Activated naive CD8-positive, alpha-beta T cell treated with anti-CD3 and anti-CD28 coated beads, Interleukin-2, amount 10 ng/mL, durations not matched to agents 7 days and 5 days (primary cell): ENCODE measurements at regions of chr2 and their contacts with region 1.

Region 1: DNA sequence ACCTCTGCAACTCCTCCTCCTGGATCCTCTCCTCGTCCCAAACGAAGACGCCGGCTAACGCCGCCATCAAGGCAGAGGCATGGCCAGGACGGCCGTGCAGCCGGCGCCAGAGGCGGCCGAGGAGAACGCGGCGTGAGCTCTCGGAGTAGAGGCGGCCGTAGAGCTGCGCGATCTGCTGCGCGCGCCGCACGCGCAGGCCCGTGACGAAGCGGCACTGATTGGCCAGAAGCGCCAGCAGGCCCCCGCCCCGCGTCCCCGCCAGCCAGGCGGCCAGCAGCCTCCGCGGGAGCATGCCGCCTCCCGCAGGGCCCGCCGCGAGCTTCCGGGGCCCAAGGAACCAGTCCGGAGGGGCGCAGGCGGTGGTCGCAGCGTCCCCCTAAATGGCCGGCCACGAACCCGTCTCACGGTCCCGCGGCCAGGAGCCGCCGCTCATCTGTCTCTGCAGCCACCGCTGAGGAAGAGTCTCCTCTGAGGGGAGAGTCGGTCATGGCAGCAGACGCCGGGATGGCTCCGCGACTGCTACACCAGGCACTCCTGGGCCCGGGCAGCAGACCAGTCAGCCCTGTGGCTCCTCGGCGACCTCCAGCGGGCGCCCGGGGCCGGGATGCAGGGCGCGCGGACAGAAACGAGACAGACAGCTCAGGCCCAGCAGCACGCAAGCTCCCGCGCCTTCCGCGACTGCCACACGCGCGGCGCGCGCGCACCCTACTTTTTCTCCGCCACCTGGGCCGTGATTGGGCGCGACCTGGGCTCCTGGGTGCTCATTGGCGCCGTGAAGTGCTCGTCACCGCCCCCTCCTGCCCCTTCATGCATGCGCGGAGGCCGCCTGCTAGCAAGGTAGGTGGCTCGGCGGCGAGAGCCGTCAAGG is at the start of gene STARD7:
- DNase-seq: peak; percentile 96
- ATAC-seq: peak; percentile 91
- H3K4me3 Mint-ChIP-seq: peak within 1 kb of the TSS; percentile 92
- H3K27ac Mint-ChIP-seq: peak within 1 kb of the TSS; percentile 88
- H3K4me1 Mint-ChIP-seq: peaks cover 35% of the 10 kb centered on the region
- H3K27me3 Mint-ChIP-seq: no peaks in the 10 kb centered on the region
- total RNA-seq, gene STARD7: 105 to 114 TPM

Region 2: DNA sequence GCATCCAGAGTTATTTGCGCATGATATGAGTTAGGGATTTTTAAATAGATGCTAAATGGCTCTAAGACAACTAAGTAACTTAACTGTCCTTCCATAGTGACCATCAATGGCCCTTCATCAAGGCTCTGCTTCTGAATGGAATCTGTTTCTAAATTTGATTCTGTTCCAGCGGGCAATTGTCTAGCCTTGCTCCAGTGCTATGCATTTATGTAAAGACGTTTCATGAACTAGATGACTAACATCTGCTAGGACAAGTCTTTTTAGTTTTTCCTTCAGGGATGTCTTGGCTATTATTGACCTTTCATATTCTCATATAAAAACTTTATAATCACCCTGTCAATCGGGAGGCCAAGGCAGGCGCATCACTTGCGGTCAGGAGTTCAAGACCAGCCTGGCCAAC is 79.9 kb before region 1 on chr2:
- POLR2A ChIA-PET with region 1: no interaction called
- DNase-seq: no peak
- ATAC-seq: no peak
- H3K4me3 Mint-ChIP-seq: no peak overlapping the region
- H3K27ac Mint-ChIP-seq: no peak overlapping the region
- H3K4me1 Mint-ChIP-seq: peaks cover 6% of the 10 kb centered on the region
- H3K27me3 Mint-ChIP-seq: no peaks in the 10 kb centered on the region

Region 3: GRCh38 chr2:96138179-96139145 is 69.9 kb before region 1 on chr2 and contains the start of gene ASTL:
- POLR2A ChIA-PET with region 1: interaction called, 10 read pairs
- DNase-seq: no peak
- ATAC-seq: peak; percentile 55
- H3K4me3 Mint-ChIP-seq: no peak within 1 kb of the TSS
- H3K27ac Mint-ChIP-seq: peak within 1 kb of the TSS; percentile 30
- H3K4me1 Mint-ChIP-seq: peaks cover 6% of the 10 kb centered on the region
- H3K27me3 Mint-ChIP-seq: no peaks in the 10 kb centered on the region
- total RNA-seq, gene ASTL: 12.2 to 14.7 TPM

Region 4: DNA sequence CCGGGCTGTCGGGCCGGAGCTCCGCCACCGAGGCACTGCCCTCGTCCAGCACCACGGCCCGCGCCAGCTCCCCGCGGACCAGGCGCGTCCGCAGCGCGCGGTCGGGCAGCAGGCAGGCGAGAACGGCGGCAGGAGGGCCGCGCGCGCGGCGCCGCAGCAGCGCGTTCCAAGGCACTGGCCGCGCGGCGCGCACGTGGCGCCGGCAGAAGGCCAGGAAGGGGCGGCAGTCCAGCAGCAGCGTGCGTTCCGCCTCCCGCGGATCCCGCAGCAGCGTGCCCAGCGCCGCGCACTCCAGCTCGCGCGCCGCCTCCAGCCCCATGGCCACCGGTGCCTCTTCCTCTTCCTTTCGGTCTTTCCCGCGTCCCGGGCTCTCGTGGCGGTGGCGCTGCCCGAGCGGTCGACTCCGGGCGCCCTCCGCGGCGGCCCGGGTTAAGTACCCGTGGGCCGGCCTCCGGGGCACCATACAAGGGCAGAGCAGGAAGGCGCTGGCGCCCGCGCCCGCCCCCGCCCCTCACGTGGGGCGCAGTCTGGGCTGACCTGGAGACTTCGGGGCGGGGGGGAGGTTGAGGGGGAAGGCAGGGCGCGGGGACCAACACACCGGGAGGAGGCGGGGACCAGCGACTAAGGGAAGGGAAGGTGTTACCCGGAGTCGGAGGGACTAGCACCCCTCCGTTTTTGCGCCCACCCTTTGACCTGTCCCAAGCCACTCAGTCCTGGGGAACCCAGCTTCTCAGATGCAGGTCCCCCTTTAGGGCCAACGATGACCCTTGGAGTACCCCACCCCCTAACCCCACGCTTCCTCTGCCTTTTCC is 63.1 kb before region 1 on chr2 and contains the start of gene DUSP2:
- POLR2A ChIA-PET with region 1: interaction called, 11 read pairs
- DNase-seq: peak; percentile 89
- ATAC-seq: peak; percentile 68
- H3K4me3 Mint-ChIP-seq: peak within 1 kb of the TSS; percentile 93
- H3K27ac Mint-ChIP-seq: peak within 1 kb of the TSS; percentile 96
- H3K4me1 Mint-ChIP-seq: peaks cover 46% of the 10 kb centered on the region
- H3K27me3 Mint-ChIP-seq: no peaks in the 10 kb centered on the region
- total RNA-seq, gene DUSP2: 47.7 to 50.2 TPM

Region 5: GRCh38 chr2:96164459-96165184 is 43.8 kb before region 1 on chr2:
- POLR2A ChIA-PET with region 1: interaction called, 11 read pairs
- DNase-seq: peak; percentile 74
- ATAC-seq: peak; percentile 86
- H3K4me3 Mint-ChIP-seq: peak overlapping the region; percentile 80
- H3K27ac Mint-ChIP-seq: peak overlapping the region; percentile 99
- H3K4me1 Mint-ChIP-seq: peaks cover 36% of the 10 kb centered on the region
- H3K27me3 Mint-ChIP-seq: no peaks in the 10 kb centered on the region

Region 6: GRCh38 chr2:96195410-96196066 is 12.8 kb before region 1 on chr2:
- POLR2A ChIA-PET with region 1: interaction called, 12 read pairs
- DNase-seq: no peak
- ATAC-seq: no peak
- H3K4me3 Mint-ChIP-seq: no peak overlapping the region
- H3K27ac Mint-ChIP-seq: peak overlapping the region; percentile 47
- H3K4me1 Mint-ChIP-seq: peaks cover 36% of the 10 kb centered on the region
- H3K27me3 Mint-ChIP-seq: no peaks in the 10 kb centered on the region

Region 7: DNA sequence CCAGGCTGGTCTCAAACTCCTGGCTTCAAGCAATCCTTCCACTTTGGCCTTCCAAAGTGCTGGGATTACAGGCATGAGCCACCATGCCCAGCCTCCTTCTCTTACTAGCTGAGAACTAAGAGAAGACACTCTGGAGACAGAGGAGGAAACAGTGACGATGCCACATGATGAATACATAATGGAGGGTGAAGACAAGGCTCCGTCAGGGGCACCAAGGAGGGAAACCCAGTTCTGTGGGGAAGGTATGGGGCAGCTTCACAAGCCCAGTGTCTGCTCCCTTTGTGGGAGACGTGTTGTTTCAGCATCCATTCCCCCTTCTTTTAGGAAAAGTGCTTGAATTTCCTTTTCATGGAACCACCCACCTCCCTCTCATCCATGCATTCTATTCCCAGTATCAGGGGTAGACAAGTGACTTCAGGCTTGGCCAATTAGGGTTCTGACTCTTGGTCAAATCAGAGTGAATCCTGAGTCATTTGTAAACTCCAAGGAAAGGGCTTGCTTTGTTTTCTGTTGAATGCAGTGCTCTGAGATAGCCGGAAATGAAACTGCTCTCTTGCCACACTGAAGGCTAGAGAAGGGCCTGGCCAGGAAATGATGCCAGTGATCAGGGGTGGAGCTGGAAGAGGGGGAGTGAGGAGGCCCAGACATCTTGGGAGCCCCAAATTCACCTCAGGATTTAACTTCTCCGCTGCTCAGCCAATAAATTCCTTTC is 33.7 kb after region 1 on chr2:
- POLR2A ChIA-PET with region 1: interaction called, 42 read pairs
- DNase-seq: peak; percentile 43
- ATAC-seq: peak; percentile 96
- H3K4me3 Mint-ChIP-seq: peak overlapping the region; percentile 74
- H3K27ac Mint-ChIP-seq: peak overlapping the region; percentile 97
- H3K4me1 Mint-ChIP-seq: peaks cover 41% of the 10 kb centered on the region
- H3K27me3 Mint-ChIP-seq: no peaks in the 10 kb centered on the region

Region 8: DNA sequence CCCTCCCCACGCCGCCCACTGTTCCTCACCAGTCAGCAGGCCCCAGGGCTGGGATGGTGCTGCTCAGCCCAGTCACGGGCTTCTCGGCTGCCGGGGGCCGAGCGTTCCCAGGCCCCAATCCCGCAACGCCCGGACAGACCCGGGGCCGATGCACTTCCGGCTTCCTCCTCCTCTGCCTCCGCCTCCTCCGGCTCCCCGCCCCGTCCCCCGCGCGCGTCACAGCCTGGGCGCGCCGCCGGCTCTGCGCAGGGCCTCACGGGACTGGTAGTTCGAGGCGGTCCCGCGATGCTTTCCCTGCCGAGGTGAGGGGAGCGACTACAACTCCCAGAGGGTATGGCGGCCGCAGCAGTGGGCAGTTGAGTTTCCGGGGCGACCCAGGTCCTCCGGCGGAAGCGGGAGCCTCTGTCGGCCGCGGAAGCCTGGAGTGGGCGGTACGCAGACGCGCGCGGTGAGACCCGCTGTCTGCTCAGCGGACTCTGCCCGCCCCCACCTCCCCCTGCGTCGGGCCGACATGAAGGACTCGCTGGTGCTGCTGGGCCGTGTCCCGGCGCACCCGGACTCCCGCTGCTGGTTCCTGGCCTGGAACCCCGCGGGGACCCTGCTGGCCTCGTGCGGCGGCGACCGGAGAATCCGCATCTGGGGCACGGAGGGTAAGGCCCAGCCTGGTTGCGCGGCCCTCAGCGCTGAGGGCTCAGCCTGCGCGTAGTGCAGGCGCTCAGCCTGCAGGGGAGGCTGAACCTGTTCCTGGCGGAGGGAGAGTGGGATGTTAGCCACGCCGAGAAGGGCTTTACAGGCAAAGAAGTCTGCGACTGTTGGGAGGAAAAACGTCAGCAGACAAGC is 57.7 kb after region 1 on chr2 and contains the starts of genes CIAO1 and TMEM127:
- POLR2A ChIA-PET with region 1: interaction called, 21 read pairs
- DNase-seq: peak; percentile 99
- ATAC-seq: peak; percentile 92
- H3K4me3 Mint-ChIP-seq: peak within 1 kb of the TSS; percentile 100
- H3K27ac Mint-ChIP-seq: peak within 1 kb of the TSS; percentile 85
- H3K4me1 Mint-ChIP-seq: peaks cover 32% of the 10 kb centered on the region
- H3K27me3 Mint-ChIP-seq: no peaks in the 10 kb centered on the region
- total RNA-seq, gene CIAO1: 66.2 to 68.2 TPM
- total RNA-seq, gene TMEM127: 33.4 to 39.1 TPM

Region 9: GRCh38 chr2:96276787-96277499 is 68.6 kb after region 1 on chr2:
- POLR2A ChIA-PET with region 1: no interaction called
- DNase-seq: no peak
- ATAC-seq: no peak
- H3K4me3 Mint-ChIP-seq: no peak overlapping the region
- H3K27ac Mint-ChIP-seq: no peak overlapping the region
- H3K4me1 Mint-ChIP-seq: no peaks in the 10 kb centered on the region
- H3K27me3 Mint-ChIP-seq: no peaks in the 10 kb centered on the region

Region 10: GRCh38 chr2:96413323-96413722 is 204.9 kb after region 1 on chr2:
- POLR2A ChIA-PET with region 1: no interaction called
- DNase-seq: no peak
- ATAC-seq: no peak
- H3K4me3 Mint-ChIP-seq: no peak overlapping the region
- H3K27ac Mint-ChIP-seq: no peak overlapping the region
- H3K4me1 Mint-ChIP-seq: peaks cover 7% of the 10 kb centered on the region
- H3K27me3 Mint-ChIP-seq: no peaks in the 10 kb centered on the region